ENCODE measurements at regions of chr11 and their contacts with region 1.

Region 1: GRCh38 chr11:95200781-95201457 is 30.1 kb downstream of the SESN3 start:
- DNase-seq: no peak
- ATAC-seq: peak; percentile 64
- H3K4me3 Mint-ChIP-seq: no peak overlapping the region
- H3K27ac Mint-ChIP-seq: no peak overlapping the region
- H3K4me1 Mint-ChIP-seq: peaks cover 46% of the 10 kb centered on the region
- H3K27me3 Mint-ChIP-seq: no peaks in the 10 kb centered on the region

Region 2: DNA sequence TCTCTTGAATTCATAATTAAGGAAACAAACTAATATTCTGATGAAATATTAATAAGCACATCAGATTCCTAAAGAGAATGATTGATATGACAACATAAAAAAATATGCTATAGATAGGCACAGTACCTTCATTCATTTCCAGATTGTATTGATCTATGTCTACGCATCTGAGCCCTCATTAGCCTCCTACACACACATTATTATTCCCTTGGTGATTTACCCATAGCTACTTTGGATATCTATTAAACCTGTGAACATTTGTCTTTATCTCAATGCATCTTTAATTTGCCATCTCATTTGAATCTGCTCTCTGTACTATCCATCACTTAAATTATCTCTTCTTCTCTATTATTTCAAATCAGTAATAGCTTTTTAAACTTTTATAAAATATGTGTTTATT is 11.7 kb after region 1 on chr11:
- CTCF ChIA-PET with region 1: interaction called, 13 read pairs
- POLR2A ChIA-PET with region 1: no interaction called
- intact Hi-C with region 1: no loop called
- DNase-seq: no peak
- ATAC-seq: no peak
- H3K4me3 Mint-ChIP-seq: no peak overlapping the region
- H3K27ac Mint-ChIP-seq: no peak overlapping the region
- H3K4me1 Mint-ChIP-seq: peaks cover 22% of the 10 kb centered on the region
- H3K27me3 Mint-ChIP-seq: no peaks in the 10 kb centered on the region

Region 3: DNA sequence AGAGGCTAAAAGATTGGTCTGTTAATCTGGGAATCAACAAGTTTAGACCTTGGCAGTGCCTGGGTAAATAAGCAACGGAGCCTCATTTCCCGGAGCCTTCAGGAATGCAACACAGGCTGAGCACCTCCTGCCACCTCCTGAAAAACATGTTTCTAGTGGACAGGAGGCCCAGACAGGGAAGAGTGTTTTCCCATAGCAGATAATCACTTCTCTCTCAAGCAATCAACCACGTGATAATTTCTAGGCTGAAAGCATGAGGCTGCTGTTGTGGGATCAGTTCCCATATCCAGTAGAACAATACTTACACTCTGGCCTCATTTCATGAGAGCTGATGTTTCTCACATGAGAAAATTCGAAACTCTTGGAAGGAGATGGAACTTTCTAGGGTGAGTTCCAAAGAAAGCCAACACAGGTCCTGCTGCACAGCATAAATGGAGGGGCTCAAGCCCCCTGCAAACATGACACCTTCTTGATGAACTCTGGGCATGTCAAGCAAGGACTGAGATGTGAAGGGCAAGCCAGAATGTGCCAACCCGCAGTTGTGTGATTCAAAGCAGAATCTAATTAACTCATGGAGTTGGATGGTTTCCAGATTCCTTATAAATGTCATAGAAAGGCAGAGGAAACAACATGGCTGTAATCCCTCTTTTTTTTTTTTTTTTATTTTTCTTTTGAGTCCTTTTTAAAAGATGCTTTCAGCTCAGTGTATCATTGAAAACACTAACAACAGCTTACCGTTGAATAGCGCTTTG is 258.5 kb after region 1 on chr11:
- CTCF ChIA-PET with region 1: no interaction called
- POLR2A ChIA-PET with region 1: no interaction called
- intact Hi-C with region 1: no loop called
- DNase-seq: no peak
- ATAC-seq: no peak
- H3K4me3 Mint-ChIP-seq: no peak overlapping the region
- H3K27ac Mint-ChIP-seq: no peak overlapping the region
- H3K4me1 Mint-ChIP-seq: no peaks in the 10 kb centered on the region
- H3K27me3 Mint-ChIP-seq: no peaks in the 10 kb centered on the region

Measured in activated CD4-positive, alpha-beta T cell treated with anti-CD3 and anti-CD28 coated beads for 36 hours (primary cell).